ENCODE measurements at regions of chr6 and their contacts with region 1.

Region 1: GRCh38 chr6:144482142-144482541 is 197.0 kb downstream of the UTRN start:
- DNase-seq: peak; percentile 76
- ATAC-seq: peak; percentile 71
- H3K4me3 ChIP-seq: no peak overlapping the region
- H3K4me3 Mint-ChIP-seq: no peak overlapping the region
- H3K27ac ChIP-seq: peak overlapping the region in 1 of 2 donors; percentile 21
- H3K27ac Mint-ChIP-seq: peak overlapping the region; percentile 3
- H3K4me1 ChIP-seq: no peaks in the 10 kb centered on the region
- H3K4me1 Mint-ChIP-seq: no peaks in the 10 kb centered on the region
- H3K27me3 ChIP-seq: no peaks in the 10 kb centered on the region
- H3K27me3 Mint-ChIP-seq: no peaks in the 10 kb centered on the region
- CTCF ChIP-seq: peak; percentile 80

Region 2: DNA sequence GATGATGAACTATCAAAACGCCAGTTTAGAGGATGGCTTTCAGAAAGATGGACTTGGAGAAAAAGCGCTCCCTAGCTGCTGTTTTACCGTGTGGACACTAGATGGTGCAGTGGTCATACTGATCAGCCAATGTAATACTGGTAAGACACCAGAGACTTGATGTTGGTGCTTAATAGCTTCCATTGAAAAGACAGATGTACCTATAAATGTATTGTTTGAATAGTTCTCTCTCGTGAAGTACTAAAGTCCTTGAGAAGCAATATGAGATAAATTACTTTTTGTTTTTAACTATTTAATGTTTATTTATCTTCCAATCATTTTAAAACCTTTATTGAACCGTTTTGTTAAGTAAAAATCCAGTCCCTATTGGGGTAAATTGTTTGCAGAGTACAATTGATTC is 906.7 kb before region 1 on chr6:
- CTCF ChIA-PET with region 1: interaction called, 19 read pairs
- POLR2A ChIA-PET with region 1: no interaction called
- intact Hi-C with region 1: loop called (anchors 1 kb)
- DNase-seq: peak; percentile 76
- ATAC-seq: peak; percentile 98
- H3K4me3 ChIP-seq: no peak overlapping the region
- H3K4me3 Mint-ChIP-seq: no peak overlapping the region
- H3K27ac ChIP-seq: no peak overlapping the region
- H3K27ac Mint-ChIP-seq: no peak overlapping the region
- H3K4me1 ChIP-seq: no peaks in the 10 kb centered on the region
- H3K4me1 Mint-ChIP-seq: no peaks in the 10 kb centered on the region
- H3K27me3 ChIP-seq: no peaks in the 10 kb centered on the region
- H3K27me3 Mint-ChIP-seq: no peaks in the 10 kb centered on the region
- CTCF ChIP-seq: peak; percentile 95

Region 3: DNA sequence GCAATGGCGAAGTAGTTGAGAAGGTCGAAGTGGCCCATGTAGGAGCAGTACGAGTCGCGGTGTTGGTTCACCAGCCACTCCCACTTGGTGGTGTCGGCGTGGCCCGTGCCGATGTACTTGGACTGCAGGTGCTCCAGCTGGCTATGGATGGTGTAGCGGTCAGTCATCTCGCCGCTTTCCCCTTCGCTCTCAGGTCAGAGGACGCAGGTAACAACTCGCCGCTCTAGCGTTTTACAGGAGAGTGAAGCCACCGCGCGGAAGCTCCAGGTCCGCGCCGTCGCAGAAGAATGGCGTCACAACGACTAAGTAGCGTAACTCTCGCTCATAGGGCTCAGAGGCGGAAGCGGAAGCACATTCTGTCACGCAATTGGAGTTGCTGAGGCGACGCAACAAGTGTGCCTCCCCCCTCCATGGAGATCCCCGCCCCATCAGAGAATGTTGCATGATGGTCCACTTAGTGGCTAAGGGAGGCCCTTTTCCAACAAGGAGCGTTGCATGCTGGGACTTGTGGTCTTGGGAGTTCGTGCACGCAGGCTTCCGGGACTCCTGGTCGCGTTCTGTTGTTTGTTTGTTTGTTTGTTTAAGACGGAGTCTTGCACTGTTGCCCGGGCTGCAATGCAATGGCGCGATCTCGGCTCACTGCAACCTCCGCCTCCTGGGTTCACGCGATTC is 386.7 kb before region 1 on chr6 and contains the start of gene SF3B5:
- CTCF ChIA-PET with region 1: interaction called, 11 read pairs
- POLR2A ChIA-PET with region 1: interaction called, 3 read pairs
- intact Hi-C with region 1: no loop called
- DNase-seq: peak; percentile 99
- ATAC-seq: peak; percentile 97
- H3K4me3 ChIP-seq: peak within 1 kb of the TSS; percentile 63 to 98 (median 73)
- H3K4me3 Mint-ChIP-seq: peak within 1 kb of the TSS; percentile 100
- H3K27ac ChIP-seq: peak within 1 kb of the TSS; percentile 77 to 84
- H3K27ac Mint-ChIP-seq: peak within 1 kb of the TSS; percentile 100
- H3K4me1 ChIP-seq: peaks cover 16 to 22% of the 10 kb centered on the region in 2 donors
- H3K4me1 Mint-ChIP-seq: peaks cover 23% of the 10 kb centered on the region
- H3K27me3 ChIP-seq: no peaks in the 10 kb centered on the region
- H3K27me3 Mint-ChIP-seq: no peaks in the 10 kb centered on the region
- CTCF ChIP-seq: no peak
- total RNA-seq, gene SF3B5: 104 and 111 TPM in 2 replicates

Region 4: DNA sequence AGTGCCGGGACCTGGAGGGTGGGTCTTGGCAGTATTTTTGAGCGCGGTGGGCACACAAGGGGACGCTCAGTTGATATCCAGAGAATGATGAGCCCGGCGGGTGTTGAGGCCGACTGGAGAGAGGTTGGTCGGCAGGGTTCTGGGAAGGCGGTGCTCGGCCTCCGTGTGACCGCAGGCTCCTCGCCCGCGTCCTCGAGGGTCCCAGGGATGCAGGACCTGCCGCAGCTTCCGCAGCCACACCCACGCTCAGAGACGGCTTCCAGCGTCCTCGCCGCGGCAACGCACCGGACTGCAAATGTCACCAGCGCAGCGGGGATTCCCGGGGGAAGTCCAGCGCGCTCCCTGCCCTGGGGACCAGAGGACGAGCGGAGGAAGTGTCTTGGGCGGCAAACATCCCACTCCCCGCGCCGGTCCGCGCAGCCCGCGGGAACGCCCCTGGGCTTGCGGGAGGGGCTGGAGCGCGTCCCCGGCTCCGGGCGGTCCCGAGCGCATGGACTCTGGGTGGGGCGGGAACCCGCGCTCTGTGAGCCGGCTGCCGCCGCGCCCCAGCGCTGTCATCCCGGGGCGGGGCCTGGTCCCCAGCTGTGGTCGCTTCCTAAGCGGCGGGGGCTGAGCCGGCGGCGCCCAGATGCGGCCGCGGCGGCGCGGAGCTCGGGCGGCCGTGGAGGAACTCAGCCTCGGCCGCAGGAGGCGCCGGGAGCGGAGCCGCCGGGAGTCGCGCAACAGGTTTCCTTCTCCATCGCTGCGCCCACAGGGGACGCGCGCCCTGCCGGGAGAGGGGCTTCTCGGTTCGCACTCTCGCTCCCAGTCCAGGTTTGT is 332.0 kb before region 1 on chr6 and contains the start of gene STX11:
- CTCF ChIA-PET with region 1: interaction called, 6 read pairs
- POLR2A ChIA-PET with region 1: no interaction called
- intact Hi-C with region 1: loop called (anchors 2 kb)
- DNase-seq: peak; percentile 85
- ATAC-seq: peak; percentile 75
- H3K4me3 ChIP-seq: peak within 1 kb of the TSS; percentile 54 to 96 (median 76)
- H3K4me3 Mint-ChIP-seq: peak within 1 kb of the TSS; percentile 96
- H3K27ac ChIP-seq: peak within 1 kb of the TSS; percentile 61 to 78
- H3K27ac Mint-ChIP-seq: peak within 1 kb of the TSS; percentile 97
- H3K4me1 ChIP-seq: peaks cover 9 to 15% of the 10 kb centered on the region in 2 donors
- H3K4me1 Mint-ChIP-seq: peaks cover 42% of the 10 kb centered on the region
- H3K27me3 ChIP-seq: no peaks in the 10 kb centered on the region
- H3K27me3 Mint-ChIP-seq: no peaks in the 10 kb centered on the region
- CTCF ChIP-seq: no peak
- total RNA-seq, gene STX11: 10.3 and 11.6 TPM in 2 replicates

Region 5: DNA sequence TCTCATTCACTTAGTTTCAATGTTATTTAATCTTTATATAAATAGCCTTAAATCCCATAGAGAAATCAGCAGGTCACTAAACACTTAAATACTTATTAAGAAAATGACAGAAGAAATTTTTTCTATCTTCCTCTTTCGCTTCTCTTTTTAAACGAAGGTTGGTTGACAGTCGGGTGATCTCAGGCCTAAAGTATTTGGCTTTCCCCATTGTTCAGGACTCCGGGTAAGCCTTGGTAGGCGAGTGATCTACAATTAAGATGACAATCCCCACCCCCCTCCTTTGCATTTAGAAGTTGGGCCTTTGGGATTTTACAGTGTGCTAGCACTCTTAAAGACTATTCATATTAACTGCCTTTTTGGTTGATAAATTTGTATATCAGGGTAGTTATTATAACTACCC is 216.8 kb before region 1 on chr6:
- CTCF ChIA-PET with region 1: interaction called, 11 read pairs
- POLR2A ChIA-PET with region 1: no interaction called
- intact Hi-C with region 1: no loop called
- DNase-seq: peak; percentile 71
- ATAC-seq: peak; percentile 91
- H3K4me3 ChIP-seq: no peak overlapping the region
- H3K4me3 Mint-ChIP-seq: peak overlapping the region; percentile 29
- H3K27ac ChIP-seq: no peak overlapping the region
- H3K27ac Mint-ChIP-seq: no peak overlapping the region
- H3K4me1 ChIP-seq: peaks cover 17% of the 10 kb centered on the region in 2 donors
- H3K4me1 Mint-ChIP-seq: peaks cover 20% of the 10 kb centered on the region
- H3K27me3 ChIP-seq: no peaks in the 10 kb centered on the region
- H3K27me3 Mint-ChIP-seq: no peaks in the 10 kb centered on the region
- CTCF ChIP-seq: no peak

Region 6: GRCh38 chr6:144334131-144334708 is 147.9 kb before region 1 on chr6:
- CTCF ChIA-PET with region 1: no interaction called
- POLR2A ChIA-PET with region 1: no interaction called
- intact Hi-C with region 1: no loop called
- DNase-seq: peak; percentile 92
- ATAC-seq: peak; percentile 76
- H3K4me3 ChIP-seq: peak overlapping the region in 4 of 5 experiments; percentile 34 to 53 (median 36)
- H3K4me3 Mint-ChIP-seq: peak overlapping the region; percentile 82
- H3K27ac ChIP-seq: peak overlapping the region; percentile 82 to 94
- H3K27ac Mint-ChIP-seq: peak overlapping the region; percentile 94
- H3K4me1 ChIP-seq: peaks cover 56 to 61% of the 10 kb centered on the region in 2 donors
- H3K4me1 Mint-ChIP-seq: peaks cover 73% of the 10 kb centered on the region
- H3K27me3 ChIP-seq: no peaks in the 10 kb centered on the region
- H3K27me3 Mint-ChIP-seq: no peaks in the 10 kb centered on the region
- CTCF ChIP-seq: no peak